ENCODE measurements at regions of chr2 and their contacts with region 1.

Region 1: DNA sequence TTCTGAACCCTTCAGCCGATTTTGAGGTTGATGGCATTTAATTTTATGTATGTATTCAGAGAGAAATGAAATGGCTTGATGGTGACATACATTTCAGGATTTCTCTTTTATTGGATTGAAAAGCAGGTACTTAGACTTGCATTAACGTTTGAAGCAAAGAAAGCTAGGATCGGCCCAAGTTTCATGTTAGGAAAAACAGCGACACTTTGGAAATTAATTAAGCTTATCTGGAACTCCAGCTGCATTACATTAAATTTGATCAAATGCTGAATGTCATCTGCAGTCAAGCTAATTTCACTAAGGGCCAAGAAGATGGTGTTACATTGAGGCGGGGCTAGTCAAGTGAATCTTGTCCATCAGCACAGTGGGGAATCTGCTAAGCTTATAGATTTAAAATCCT is 441.8 kb downstream of the IRS1 start:
- DNase-seq: no peak
- ATAC-seq: no peak
- H3K4me3 ChIP-seq: no peak overlapping the region
- H3K4me3 Mint-ChIP-seq: no peak overlapping the region
- H3K27ac ChIP-seq: no peak overlapping the region
- H3K27ac Mint-ChIP-seq: no peak overlapping the region
- H3K4me1 ChIP-seq: no peaks in the 10 kb centered on the region
- H3K4me1 Mint-ChIP-seq: no peaks in the 10 kb centered on the region
- H3K27me3 ChIP-seq: no peaks in the 10 kb centered on the region
- H3K27me3 Mint-ChIP-seq: peaks cover 25% of the 10 kb centered on the region
- CTCF ChIP-seq: no peak

Region 2: GRCh38 chr2:226336283-226336682 is 21.5 kb before region 1 on chr2:
- CTCF ChIA-PET with region 1: no interaction called
- POLR2A ChIA-PET with region 1: no interaction called
- intact Hi-C with region 1: loop called in 1 of 2 experiments (anchors 1 kb)
- DNase-seq: no peak
- ATAC-seq: no peak
- H3K4me3 ChIP-seq: no peak overlapping the region
- H3K4me3 Mint-ChIP-seq: no peak overlapping the region
- H3K27ac ChIP-seq: no peak overlapping the region
- H3K27ac Mint-ChIP-seq: no peak overlapping the region
- H3K4me1 ChIP-seq: no peaks in the 10 kb centered on the region
- H3K4me1 Mint-ChIP-seq: no peaks in the 10 kb centered on the region
- H3K27me3 ChIP-seq: peaks cover 0 to 2% of the 10 kb centered on the region in 2 experiments
- H3K27me3 Mint-ChIP-seq: no peaks in the 10 kb centered on the region
- CTCF ChIP-seq: no peak

Region 3: GRCh38 chr2:226378753-226379580 is 21.2 kb after region 1 on chr2:
- CTCF ChIA-PET with region 1: no interaction called
- POLR2A ChIA-PET with region 1: no interaction called
- intact Hi-C with region 1: no loop called
- DNase-seq: no peak
- ATAC-seq: no peak
- H3K4me3 ChIP-seq: no peak overlapping the region
- H3K4me3 Mint-ChIP-seq: no peak overlapping the region
- H3K27ac ChIP-seq: no peak overlapping the region
- H3K27ac Mint-ChIP-seq: no peak overlapping the region
- H3K4me1 ChIP-seq: no peaks in the 10 kb centered on the region
- H3K4me1 Mint-ChIP-seq: no peaks in the 10 kb centered on the region
- H3K27me3 ChIP-seq: no peaks in the 10 kb centered on the region
- H3K27me3 Mint-ChIP-seq: peaks cover 8% of the 10 kb centered on the region
- CTCF ChIP-seq: no peak

Region 4: GRCh38 chr2:226622484-226622883 is 264.7 kb after region 1 on chr2:
- CTCF ChIA-PET with region 1: no interaction called
- POLR2A ChIA-PET with region 1: no interaction called
- intact Hi-C with region 1: no loop called
- DNase-seq: no peak
- ATAC-seq: no peak
- H3K4me3 ChIP-seq: no peak overlapping the region
- H3K4me3 Mint-ChIP-seq: no peak overlapping the region
- H3K27ac ChIP-seq: no peak overlapping the region
- H3K27ac Mint-ChIP-seq: no peak overlapping the region
- H3K4me1 ChIP-seq: no peaks in the 10 kb centered on the region
- H3K4me1 Mint-ChIP-seq: no peaks in the 10 kb centered on the region
- H3K27me3 ChIP-seq: no peaks in the 10 kb centered on the region
- H3K27me3 Mint-ChIP-seq: peaks cover 16% of the 10 kb centered on the region
- CTCF ChIP-seq: no peak